PC-3 (cell line): ENCODE measurements at regions of chr5 and their contacts with region 1.

Region 1: DNA sequence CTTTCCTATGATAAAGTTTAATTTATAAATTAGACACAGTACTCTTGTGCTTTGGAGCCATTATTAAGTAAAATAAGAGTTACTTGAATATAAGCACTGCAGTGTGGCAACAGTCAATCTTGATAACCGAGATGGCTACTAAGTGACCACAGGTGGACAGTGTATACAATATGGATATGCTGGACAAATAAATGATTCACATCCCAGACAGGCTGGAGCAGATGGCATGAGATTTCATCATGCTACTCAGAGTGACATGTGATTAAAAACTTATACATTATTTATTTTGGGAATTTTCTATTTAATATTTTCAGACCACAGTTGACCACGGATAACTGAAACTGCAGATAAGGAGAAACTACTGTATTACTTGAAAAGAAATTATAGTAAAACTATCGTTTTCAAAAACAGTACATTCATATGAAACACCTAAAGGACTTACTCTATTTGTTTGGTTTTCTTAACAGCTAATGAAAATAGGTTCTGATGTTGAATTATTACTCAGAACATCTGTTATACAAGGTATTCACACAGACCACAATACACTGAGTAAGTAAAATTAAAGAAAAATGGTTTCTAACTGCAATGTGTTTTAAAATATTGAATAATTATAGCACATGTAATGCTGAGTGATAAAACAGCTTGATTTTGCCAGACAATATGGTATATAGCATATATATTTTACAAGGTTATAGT is 16.0 kb downstream of the LYRM7 start:
- DNase-seq: peak; percentile 39
- ATAC-seq: peak; percentile 98
- H3K4me3 ChIP-seq: no peak overlapping the region
- H3K27ac ChIP-seq: peak overlapping the region; percentile 45
- H3K4me1 ChIP-seq: peaks cover 3% of the 10 kb centered on the region; the same call in 1 of the 2 replicates
- H3K27me3 ChIP-seq: no peaks in the 10 kb centered on the region
- CTCF ChIP-seq: no peak

Region 2: DNA sequence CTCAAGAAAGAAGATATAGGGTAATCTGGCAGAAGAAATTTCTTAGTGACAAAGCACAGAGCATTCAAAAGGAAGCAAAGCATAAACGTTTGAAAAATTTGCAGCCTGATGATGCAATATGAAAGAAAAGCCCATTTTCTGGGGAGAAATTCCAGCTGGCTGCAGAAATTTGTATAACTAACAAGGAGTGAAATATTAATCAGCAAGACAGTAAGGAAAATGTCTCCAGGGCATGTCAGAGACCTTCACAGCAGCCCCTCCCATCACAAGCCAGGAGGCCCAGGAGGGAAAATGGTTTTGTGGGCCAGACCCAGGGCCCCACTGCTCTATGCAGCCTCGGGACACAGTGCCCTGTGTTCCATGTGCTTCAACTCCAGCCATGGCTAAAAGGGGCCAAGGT is 381.1 kb before region 1 on chr5:
- CTCF ChIA-PET with region 1: no interaction called
- POLR2A ChIA-PET with region 1: no interaction called
- intact Hi-C with region 1: no loop called
- DNase-seq: no peak
- ATAC-seq: no peak
- H3K4me3 ChIP-seq: no peak overlapping the region
- H3K27ac ChIP-seq: no peak overlapping the region
- H3K4me1 ChIP-seq: no peaks in the 10 kb centered on the region
- H3K27me3 ChIP-seq: no peaks in the 10 kb centered on the region
- CTCF ChIP-seq: no peak

Region 3: DNA sequence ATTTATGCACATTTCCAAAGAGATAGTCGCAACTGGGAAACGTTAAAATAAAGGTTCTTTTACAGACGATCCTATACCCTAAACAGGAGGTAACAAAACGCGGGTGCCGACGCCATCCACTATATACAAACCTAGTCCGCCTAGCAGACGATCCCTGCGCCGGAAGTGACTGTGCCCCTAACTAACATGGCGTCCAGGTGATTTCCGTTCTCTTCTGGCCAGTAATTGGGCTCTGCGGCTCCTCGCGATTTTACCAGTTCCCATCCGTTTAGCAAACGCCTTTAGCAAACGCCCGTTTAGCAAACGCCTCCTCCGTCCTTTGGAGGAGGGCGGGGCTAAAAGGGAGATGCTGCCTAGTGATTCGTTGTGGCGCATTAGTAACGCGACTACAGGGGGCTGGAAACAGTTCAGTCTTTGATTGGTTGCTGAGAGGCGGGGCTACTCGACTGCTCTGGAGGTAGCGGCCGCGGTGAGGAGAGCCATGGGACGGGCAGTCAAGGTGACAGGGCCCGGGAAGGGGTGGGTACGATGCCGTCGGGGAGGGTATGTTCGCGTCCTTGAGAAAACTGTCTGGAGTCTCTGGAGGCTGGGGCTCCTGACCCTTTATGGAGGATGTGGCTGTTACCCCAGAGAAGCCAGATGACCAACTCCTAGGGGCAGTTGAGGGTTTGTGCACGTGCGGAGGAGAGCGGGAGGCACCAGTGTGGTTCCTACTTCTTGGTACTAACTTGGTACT is 16.0 kb before region 1 on chr5 and contains the start of gene LYRM7:
- CTCF ChIA-PET with region 1: no interaction called
- POLR2A ChIA-PET with region 1: no interaction called
- intact Hi-C with region 1: loop called (anchors 2 kb)
- DNase-seq: peak; percentile 98
- ATAC-seq: peak; percentile 97
- H3K4me3 ChIP-seq: peak within 1 kb of the TSS; percentile 95
- H3K27ac ChIP-seq: 0 out of 2 replicates have a peak within 1 kb of the TSS, but pooled peaks have one; percentile 17
- H3K4me1 ChIP-seq: 0 out of 2 replicates have a peak, but pooled peaks cover 10% of the 10 kb centered on the region
- H3K27me3 ChIP-seq: no peaks in the 10 kb centered on the region
- CTCF ChIP-seq: no peak
- total RNA-seq, gene LYRM7: 5.0 and 6.7 TPM in 2 replicates

Region 4: DNA sequence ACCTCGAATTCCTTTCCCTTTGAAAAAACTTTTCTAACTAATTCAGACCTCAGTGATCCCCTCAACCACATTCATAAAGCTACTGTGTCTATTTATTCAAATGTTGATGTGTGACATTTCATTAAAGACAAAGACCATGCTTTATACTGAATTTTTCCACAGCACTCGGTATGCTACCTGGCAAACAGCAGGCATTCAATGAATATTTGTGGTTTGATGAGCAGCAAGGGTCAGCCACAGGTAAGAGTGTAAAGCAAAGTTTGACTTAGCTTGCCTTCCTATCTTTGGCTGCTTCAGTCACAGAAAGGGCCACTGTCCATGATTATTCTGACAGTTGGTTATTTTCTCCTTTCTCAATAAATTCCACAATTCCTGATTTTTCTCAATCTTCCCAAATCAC is 72.0 kb after region 1 on chr5:
- CTCF ChIA-PET with region 1: no interaction called
- POLR2A ChIA-PET with region 1: no interaction called
- intact Hi-C with region 1: loop called (anchors 5 kb)
- DNase-seq: peak; percentile 73
- ATAC-seq: peak; percentile 45
- H3K4me3 ChIP-seq: peak overlapping the region; percentile 12; the same call in 1 of the 2 replicates
- H3K27ac ChIP-seq: peak overlapping the region; percentile 25
- H3K4me1 ChIP-seq: peaks cover 29% of the 10 kb centered on the region
- H3K27me3 ChIP-seq: no peaks in the 10 kb centered on the region
- CTCF ChIP-seq: no peak